Prostate gland (tissue), 2 donors: ENCODE measurements at regions of chr6 and their contacts with region 1.

Region 1: GRCh38 chr6:47631269-47631772 is 67.1 kb upstream of the ADGRF4 start:
- DNase-seq: no peak
- H3K4me3 ChIP-seq: no peak overlapping the region
- H3K27ac ChIP-seq: no peak overlapping the region
- H3K4me1 ChIP-seq: no peaks in the 10 kb centered on the region
- H3K27me3 ChIP-seq: no peaks in the 10 kb centered on the region
- CTCF ChIP-seq: peak; percentile 54 to 73 (median 63)
- POLR2A ChIP-seq: no peak

Region 2: DNA sequence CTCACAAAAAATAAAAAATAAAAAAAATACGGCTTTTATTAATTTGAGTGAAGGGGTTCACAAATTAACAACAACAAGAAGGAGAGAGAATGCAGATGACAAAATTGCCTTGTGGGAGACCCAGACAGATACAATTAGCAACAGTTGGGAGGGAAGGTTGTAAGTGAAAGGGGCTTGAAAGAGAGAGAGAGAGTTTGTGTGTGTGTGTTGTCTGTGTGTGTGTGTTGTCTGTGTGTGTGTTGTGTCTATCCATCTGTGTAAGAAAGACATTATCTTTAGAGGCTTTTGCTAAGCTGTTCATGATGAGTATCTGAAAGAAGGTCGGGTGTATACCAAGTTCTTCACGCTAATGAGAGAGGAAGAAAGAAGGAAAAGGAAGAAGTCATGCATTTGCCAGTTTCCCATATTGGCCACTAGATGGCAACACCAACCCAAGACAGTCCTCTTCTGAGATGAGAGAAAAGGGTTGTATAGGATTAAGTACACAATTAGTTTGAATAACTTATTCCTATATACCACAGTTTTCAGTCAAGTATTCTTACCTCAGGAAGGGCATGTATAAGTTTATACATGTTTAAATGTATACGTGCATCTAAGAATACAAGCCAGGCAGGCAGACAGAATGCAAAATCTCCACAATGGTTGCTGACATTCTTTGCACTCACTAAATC is 217.4 kb before region 1 on chr6:
- intact Hi-C with region 1: loop called (anchors 10 kb)
- DNase-seq: peak; percentile 51
- H3K4me3 ChIP-seq: peak overlapping the region; percentile 33 to 36
- H3K27ac ChIP-seq: peak overlapping the region; percentile 47 to 61
- H3K4me1 ChIP-seq: no peaks in the 10 kb centered on the region
- H3K27me3 ChIP-seq: no peaks in the 10 kb centered on the region
- CTCF ChIP-seq: peak; percentile 87 to 91 (median 90)
- POLR2A ChIP-seq: no peak

Region 3: DNA sequence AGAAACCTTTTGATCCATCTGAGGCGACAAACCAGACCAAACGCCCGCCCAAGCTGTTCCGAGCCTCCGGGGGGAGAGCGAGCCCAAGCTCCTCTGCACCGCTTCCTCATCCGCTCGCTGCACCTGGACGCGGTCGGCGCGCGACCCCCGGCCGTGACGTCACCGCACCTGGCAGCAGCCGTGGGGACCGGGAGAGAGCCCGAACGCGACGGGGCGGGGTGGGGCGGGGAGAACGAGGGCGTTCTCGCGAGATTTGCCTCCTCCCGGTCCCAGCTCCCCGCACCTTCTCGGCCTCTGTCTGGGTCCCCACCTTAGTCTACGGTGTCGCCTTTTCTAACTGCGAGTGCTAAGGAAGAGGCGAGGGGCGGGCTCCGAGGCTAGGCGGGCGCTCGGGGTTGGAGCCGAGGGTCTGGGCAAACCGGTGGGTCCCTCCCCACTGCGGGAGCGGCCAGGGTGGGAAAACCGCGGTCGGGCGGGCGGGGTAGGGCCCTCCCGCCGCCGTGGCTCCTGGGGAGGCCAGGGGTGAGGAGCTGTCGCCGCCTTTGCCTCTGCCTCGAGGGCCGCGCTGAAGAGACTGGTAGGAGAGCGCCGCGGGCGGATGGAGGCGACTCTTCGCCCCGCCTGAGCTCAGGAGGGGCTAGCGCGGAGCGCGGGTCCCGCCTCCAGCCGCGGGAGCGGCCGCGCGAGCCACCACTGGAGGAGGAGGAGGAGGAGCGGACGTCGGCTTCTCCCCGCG is 153.7 kb before region 1 on chr6 and contains the start of gene CD2AP:
- intact Hi-C with region 1: loop called (anchors 10 kb)
- DNase-seq: peak; percentile 89
- H3K4me3 ChIP-seq: peak within 1 kb of the TSS; percentile 93 to 97
- H3K27ac ChIP-seq: peak within 1 kb of the TSS; percentile 98 to 99
- H3K4me1 ChIP-seq: no peaks in the 10 kb centered on the region
- H3K27me3 ChIP-seq: no peaks in the 10 kb centered on the region
- CTCF ChIP-seq: peak in 1 of 4 experiments; percentile 12
- POLR2A ChIP-seq: peak; percentile 68
- total RNA-seq, gene CD2AP: 30.3 to 33.6 TPM

Region 4: GRCh38 chr6:47780510-47781356 is 149.4 kb after region 1 on chr6:
- intact Hi-C with region 1: loop called (anchors 5 kb)
- DNase-seq: peak; percentile 33
- H3K4me3 ChIP-seq: no peak overlapping the region
- H3K27ac ChIP-seq: no peak overlapping the region
- H3K4me1 ChIP-seq: no peaks in the 10 kb centered on the region
- H3K27me3 ChIP-seq: no peaks in the 10 kb centered on the region
- CTCF ChIP-seq: peak in 3 of 4 experiments; percentile 50 to 77 (median 63)
- POLR2A ChIP-seq: no peak